Testis (tissue), 5 donors: ENCODE measurements at regions of chr10 and their contacts with region 1.

Region 1: GRCh38 chr10:44310762-44311562 is 73.9 kb downstream of the CXCL12 start:
- DNase-seq: peak; percentile 90
- H3K4me3 ChIP-seq: peak overlapping the region; percentile 17 to 40
- H3K27ac ChIP-seq: no peak overlapping the region
- H3K4me1 ChIP-seq: no peaks in the 10 kb centered on the region
- H3K27me3 ChIP-seq: no peaks in the 10 kb centered on the region
- CTCF ChIP-seq: peak; percentile 90 to 94 (median 93)
- POLR2A ChIP-seq: no peak

Region 2: DNA sequence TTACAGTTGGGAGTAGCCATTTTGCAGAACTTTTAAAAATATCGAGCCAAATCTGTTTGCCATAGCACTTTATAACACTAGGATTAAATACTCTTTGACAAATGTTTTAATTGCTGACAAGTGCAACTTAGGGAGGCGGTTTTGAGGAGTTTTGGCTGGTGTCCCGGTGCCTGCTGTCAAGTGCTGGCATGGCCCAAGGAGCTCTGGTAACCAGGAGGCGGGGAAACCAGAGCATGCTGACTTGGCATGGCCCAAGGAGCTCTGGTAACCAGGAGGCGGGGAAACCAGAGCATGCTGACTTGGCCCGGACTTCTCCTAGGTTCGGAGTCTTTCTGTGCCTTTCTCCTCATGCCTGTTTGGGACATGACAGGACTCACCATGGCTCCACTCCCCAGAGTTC is 631.5 kb before region 1 on chr10:
- intact Hi-C with region 1: loop called (anchors 5 kb)
- DNase-seq: no peak
- H3K4me3 ChIP-seq: no peak overlapping the region
- H3K27ac ChIP-seq: no peak overlapping the region
- H3K4me1 ChIP-seq: no peaks in the 10 kb centered on the region
- H3K27me3 ChIP-seq: no peaks in the 10 kb centered on the region
- CTCF ChIP-seq: no peak
- POLR2A ChIP-seq: no peak

Region 3: GRCh38 chr10:43689955-43690771 is 620.8 kb before region 1 on chr10:
- intact Hi-C with region 1: loop called (anchors 5 kb)
- DNase-seq: peak; percentile 90
- H3K4me3 ChIP-seq: peak overlapping the region; percentile 62 to 67
- H3K27ac ChIP-seq: peak overlapping the region in 1 of 2 donors; percentile 75
- H3K4me1 ChIP-seq: peaks cover 7% of the 10 kb centered on the region
- H3K27me3 ChIP-seq: no peaks in the 10 kb centered on the region
- CTCF ChIP-seq: peak; percentile 86 to 90 (median 90)
- POLR2A ChIP-seq: no peak

Region 4: GRCh38 chr10:44457259-44457658 is 146.3 kb after region 1 on chr10:
- intact Hi-C with region 1: no loop called
- DNase-seq: no peak
- H3K4me3 ChIP-seq: no peak overlapping the region
- H3K27ac ChIP-seq: no peak overlapping the region
- H3K4me1 ChIP-seq: peaks cover 19% of the 10 kb centered on the region
- H3K27me3 ChIP-seq: no peaks in the 10 kb centered on the region
- CTCF ChIP-seq: peak in 1 of 3 experiments; percentile 41
- POLR2A ChIP-seq: no peak